Activated naive CD4-positive, alpha-beta T cell treated with anti-CD3 and anti-CD28 coated beads for 36 hours (primary cell): ENCODE measurements at regions of chr7 and their contacts with region 1.

Region 1: GRCh38 chr7:604001-604883 is 84.6 kb upstream of the PDGFA start:
- DNase-seq: peak; percentile 97
- H3K4me3 Mint-ChIP-seq: peak overlapping the region; percentile 84
- H3K27ac Mint-ChIP-seq: peak overlapping the region; percentile 100
- H3K4me1 Mint-ChIP-seq: peaks cover 71% of the 10 kb centered on the region
- H3K27me3 Mint-ChIP-seq: no peaks in the 10 kb centered on the region

Region 2: DNA sequence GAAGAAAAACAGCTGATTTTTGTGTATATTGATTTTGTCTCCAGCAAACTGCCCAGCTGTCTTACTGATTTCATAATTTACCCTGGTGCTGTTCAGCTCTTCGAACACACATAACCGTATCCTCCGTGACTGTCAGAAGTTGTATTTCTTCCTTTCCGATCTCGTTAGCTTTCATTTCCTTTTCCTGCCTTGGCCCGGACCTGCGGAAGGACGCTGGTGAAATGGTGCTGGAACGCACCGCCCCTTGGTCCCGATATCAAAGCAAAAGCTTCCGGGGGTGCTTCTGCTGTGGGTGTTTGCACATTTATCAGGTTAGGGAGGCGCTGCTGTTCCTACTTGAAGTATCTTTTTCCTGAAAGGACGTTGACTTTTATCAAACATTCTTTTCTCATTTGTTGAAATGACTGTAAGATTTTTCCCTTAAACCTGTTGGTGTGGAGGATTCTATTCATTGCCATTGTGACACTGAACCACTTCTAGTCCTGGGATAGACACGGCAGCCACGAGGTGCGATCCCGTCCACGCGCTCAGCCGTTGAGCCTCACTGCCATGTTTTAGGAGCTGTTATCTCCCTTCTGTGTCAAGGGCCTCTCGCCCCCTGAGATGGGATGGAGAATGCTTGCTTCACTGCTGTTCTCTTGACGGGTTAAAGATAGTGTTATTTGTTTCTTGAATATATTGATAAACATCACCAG is 241.7 kb before region 1 on chr7:
- CTCF ChIA-PET with region 1: no interaction called
- intact Hi-C with region 1: loop called (anchors 5 kb)
- DNase-seq: peak; percentile 69
- H3K4me3 Mint-ChIP-seq: peak overlapping the region; percentile 67
- H3K27ac Mint-ChIP-seq: peak overlapping the region; percentile 79
- H3K4me1 Mint-ChIP-seq: peaks cover 66% of the 10 kb centered on the region
- H3K27me3 Mint-ChIP-seq: no peaks in the 10 kb centered on the region

Region 3: DNA sequence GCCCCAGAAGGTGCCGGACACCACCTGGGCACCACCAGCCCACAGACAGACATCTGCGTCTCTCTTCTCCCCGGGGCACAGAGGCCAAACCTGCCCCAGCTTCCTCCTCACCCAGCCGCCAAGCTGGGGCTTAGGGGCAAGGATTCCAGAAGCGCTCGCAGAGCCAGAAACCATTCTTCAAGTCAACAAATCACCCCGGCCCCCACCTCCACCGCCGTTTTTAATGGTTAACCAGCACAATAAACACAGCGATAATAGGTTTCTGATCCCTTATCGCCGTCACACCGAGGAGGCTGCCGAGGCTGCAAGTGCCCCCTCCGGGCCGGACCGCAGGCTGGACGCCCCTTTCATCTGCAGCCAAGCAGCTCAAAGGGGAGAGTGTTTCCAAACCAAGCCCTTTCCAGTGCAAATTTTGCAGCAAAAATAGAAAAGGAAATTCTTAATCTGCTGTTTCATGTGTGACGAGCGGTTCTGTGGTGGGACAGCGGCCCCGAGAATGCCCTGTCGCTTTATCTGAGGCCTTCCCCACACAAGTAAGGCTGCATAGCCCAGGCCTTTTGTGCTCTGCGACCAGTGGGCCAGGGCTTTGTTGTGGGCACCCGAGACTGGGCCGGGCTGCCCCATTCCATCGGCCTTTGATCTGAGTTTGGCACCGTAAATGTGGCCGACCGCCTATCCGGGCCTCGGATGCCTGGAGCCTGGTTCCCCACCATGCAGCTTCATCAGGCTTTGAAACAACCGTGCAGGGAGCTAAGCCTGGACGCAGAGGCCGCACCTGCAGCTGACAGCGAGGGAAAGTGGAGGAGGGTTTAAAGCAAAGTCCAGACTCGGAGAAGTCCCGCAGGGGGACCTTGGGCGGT is 231.1 kb before region 1 on chr7:
- CTCF ChIA-PET with region 1: no interaction called
- intact Hi-C with region 1: no loop called
- DNase-seq: peak; percentile 4
- H3K4me3 Mint-ChIP-seq: no peak overlapping the region
- H3K27ac Mint-ChIP-seq: no peak overlapping the region
- H3K4me1 Mint-ChIP-seq: peaks cover 2% of the 10 kb centered on the region
- H3K27me3 Mint-ChIP-seq: no peaks in the 10 kb centered on the region

Region 4: DNA sequence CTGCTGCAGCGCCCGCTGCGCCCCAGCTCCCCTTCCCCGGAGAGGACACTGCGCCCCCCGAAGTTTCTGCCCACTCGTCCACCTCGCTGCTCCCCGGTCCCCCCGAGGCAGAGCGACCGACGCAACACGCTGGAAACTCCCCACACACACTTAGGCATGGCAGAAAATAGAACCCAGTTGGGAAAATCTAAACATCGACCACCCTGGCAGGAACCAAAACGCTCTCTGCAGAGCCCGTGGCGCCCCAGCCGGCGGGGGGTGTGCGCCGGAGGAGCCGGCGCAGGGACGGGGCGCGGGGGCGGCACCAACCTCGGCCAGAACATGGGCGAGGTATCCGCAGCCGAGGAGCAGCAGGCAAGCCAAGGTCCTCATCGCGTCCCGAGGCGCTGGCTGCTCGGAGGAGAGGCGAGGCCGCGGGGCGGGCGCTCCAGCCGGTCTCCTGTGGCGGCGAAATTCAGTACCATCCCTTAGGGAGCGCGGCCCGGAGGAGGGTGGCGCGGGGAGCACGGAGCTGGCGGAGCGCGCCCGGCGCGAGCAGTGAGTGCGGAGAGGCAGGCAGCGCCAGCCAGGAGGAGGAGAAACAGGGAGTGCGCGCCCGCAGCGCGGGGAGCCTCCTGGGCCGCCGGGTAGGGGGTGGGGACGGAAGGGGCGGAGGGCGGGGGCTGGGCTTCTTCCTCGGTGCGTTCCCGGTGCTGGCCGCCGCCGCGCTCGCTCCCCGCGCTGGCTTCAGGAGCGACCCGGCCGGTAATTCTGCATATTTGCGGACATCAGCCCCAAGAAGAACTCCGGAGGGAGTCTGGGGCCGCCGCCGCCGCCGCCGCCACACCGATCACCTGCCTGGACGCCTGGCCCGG is 85.4 kb before region 1 on chr7:
- CTCF ChIA-PET with region 1: no interaction called
- intact Hi-C with region 1: loop called (anchors 5 kb)
- DNase-seq: peak; percentile 75
- H3K4me3 Mint-ChIP-seq: peak overlapping the region; percentile 81
- H3K27ac Mint-ChIP-seq: no peak overlapping the region
- H3K4me1 Mint-ChIP-seq: peaks cover 20% of the 10 kb centered on the region
- H3K27me3 Mint-ChIP-seq: peaks cover 33% of the 10 kb centered on the region

Region 5: DNA sequence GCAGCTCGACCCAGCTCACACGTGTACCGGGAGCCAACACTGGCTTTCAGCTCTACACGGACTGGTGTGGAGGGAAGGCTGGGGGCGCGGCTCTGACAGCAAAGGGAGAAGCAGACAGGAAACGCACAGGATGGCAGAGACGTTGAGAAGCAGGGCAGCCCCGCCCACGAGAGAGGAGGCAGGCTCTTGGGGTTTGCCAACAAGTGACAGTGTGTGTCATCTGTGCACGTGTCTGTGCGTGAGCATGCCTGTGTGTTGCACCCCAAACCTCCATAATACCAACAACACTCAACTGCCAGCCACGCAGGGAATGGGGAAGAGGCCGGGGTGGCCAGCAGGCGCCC is 20.1 kb before region 1 on chr7:
- CTCF ChIA-PET with region 1: interaction called, 4 read pairs
- intact Hi-C with region 1: loop called (anchors 1 kb)
- DNase-seq: peak; percentile 98
- H3K4me3 Mint-ChIP-seq: peak overlapping the region; percentile 85
- H3K27ac Mint-ChIP-seq: peak overlapping the region; percentile 95
- H3K4me1 Mint-ChIP-seq: peaks cover 38% of the 10 kb centered on the region
- H3K27me3 Mint-ChIP-seq: no peaks in the 10 kb centered on the region

Region 6: DNA sequence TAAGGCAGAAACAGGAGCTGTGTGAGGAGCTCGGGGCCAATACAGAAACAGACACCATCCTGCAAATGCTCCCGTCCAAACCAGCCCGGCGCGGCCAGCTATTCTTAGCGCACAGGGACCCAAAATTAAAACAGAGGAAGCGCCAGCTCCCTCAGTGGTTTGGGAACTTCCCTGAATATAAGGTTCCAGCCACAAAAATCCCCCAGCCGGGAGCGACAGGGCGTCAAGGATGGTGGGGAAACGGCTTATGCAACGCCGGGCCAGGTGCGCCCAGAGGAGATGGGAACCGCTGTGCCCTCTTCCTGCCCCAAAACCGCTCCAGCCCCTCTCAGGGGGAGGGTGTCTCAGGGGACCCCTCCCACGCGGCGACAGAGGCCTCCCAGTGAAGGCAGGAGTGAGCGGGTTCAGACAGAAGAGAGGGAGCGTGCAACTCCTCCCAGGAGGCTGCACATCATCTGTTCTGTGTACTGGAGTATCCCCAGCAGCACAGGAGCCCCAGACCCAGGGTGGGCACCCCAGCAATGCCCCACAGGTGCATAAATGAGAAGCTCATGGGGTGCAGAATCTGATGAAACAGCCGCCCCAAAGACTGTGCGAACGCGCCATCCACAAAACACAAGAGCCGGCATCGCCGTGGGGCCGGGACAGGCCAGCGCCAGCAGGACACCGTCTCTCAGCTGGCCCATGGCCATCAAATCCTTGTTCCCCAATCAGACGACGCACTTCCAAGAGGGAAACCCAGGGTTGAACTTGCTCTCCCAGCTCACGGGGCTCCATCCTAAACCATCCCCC is 10.7 kb before region 1 on chr7:
- CTCF ChIA-PET with region 1: no interaction called
- intact Hi-C with region 1: loop called (anchors 1 kb)
- DNase-seq: peak; percentile 65
- H3K4me3 Mint-ChIP-seq: peak overlapping the region; percentile 36
- H3K27ac Mint-ChIP-seq: peak overlapping the region; percentile 69
- H3K4me1 Mint-ChIP-seq: peaks cover 31% of the 10 kb centered on the region
- H3K27me3 Mint-ChIP-seq: no peaks in the 10 kb centered on the region

Region 7: DNA sequence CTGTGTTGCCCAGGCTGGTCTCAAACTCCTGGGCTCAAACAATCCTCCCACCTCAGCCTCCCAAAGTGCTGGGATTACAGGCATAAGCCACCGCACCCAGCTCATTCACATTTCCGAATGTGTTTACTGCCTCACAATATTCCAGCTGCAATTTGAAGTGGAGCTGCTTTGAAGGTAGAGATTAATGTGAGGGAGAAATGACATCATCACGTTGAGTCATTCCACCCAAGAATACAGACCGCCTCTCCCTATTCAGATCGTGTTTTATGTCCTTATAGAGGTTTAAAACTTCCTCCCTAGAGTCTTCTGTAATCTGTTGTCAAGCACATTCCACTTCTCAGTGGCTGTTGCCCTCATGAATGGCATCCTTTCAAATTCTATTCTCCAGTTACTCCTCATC is 15.8 kb after region 1 on chr7:
- CTCF ChIA-PET with region 1: interaction called, 4 read pairs
- intact Hi-C with region 1: loop called (anchors 1 kb)
- DNase-seq: peak; percentile 59
- H3K4me3 Mint-ChIP-seq: no peak overlapping the region
- H3K27ac Mint-ChIP-seq: peak overlapping the region; percentile 99
- H3K4me1 Mint-ChIP-seq: peaks cover 60% of the 10 kb centered on the region
- H3K27me3 Mint-ChIP-seq: no peaks in the 10 kb centered on the region

Region 8: GRCh38 chr7:726084-726853 is 122.0 kb after region 1 on chr7 and contains the start of gene DNAAF5:
- CTCF ChIA-PET with region 1: no interaction called
- intact Hi-C with region 1: loop called (anchors 5 kb)
- DNase-seq: peak; percentile 88
- H3K4me3 Mint-ChIP-seq: peak within 1 kb of the TSS; percentile 84
- H3K27ac Mint-ChIP-seq: peak within 1 kb of the TSS; percentile 65
- H3K4me1 Mint-ChIP-seq: peaks cover 31% of the 10 kb centered on the region
- H3K27me3 Mint-ChIP-seq: no peaks in the 10 kb centered on the region
- total RNA-seq, gene DNAAF5: 26.2 to 27.5 TPM